Activated CD4-positive, alpha-beta memory T cell treated with anti-CD3 and anti-CD28 coated beads for 36 hours (primary cell): ENCODE measurements at regions of chr11 and their contacts with region 1.

Region 1: DNA sequence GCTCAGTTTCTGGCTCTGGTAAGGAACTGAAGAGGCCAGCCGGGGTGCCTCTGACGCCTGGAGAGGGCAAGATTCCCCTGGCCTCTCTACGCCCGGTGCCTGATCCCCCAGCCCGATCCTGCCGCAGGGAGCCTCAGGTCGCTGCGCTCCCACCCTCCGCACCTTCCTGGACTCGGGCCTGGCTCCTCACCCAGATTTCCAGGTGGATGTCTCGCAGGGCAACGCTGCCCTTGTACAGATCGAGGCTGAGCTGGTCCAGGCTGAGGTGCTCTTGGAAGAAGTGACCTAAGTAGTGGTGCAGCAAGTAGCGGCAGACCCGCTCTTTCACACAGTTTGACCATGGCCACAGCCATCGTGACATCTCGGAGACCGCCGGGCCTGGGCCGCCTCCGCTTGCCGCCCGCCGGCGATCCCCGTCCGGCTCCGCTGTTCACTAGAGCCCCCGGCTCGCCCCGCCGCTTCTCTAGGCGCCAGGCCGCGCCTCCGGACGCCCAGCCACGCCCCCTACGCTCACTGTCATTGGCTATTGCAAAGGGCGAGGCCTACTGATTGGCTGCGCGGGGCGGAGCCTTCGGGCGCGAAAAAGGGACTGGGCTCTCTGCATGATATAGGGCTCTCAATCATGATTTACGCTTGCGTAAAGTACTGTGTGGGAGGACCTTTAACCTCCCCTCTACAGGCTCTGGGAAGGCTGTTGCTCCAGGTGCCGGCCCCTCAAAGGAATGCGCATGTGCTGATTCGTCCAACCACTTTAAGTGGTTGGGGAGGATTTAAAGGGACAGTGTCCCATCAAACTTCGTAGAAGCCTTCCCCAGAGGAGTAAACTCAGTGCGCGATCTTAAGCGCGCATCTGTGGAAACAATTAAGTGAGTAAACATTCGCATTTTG is at the start of gene ATG2A:
- DNase-seq: peak; percentile 99
- H3K4me3 Mint-ChIP-seq: peak within 1 kb of the TSS; percentile 94
- H3K27ac Mint-ChIP-seq: peak within 1 kb of the TSS; percentile 86
- H3K4me1 Mint-ChIP-seq: peaks cover 26% of the 10 kb centered on the region
- H3K27me3 Mint-ChIP-seq: no peaks in the 10 kb centered on the region
- total RNA-seq, gene ATG2A: 20.2 to 20.5 TPM

Region 2: DNA sequence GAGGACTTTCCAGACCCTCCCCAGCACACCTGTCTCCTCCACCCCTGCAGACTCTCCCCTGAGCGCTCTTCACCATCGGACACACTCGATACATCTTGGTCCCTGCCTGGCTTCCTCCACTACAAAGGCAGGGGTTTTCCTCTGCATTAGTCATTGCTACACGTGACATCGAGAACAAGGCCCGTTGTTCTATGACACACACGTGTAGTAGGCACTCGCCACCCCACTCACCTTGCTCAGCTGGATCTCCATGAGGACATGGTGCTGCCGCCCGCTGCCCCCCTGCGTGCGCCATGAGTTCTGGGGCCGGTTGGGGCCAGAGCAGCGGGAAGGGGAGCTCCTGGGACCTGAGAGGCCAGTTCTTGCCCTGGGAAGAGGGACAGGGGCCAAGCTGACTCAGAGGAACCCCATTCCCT is 16.7 kb before region 1 on chr11:
- CTCF ChIA-PET with region 1: interaction called, 3 read pairs
- POLR2A ChIA-PET with region 1: no interaction called
- intact Hi-C with region 1: loop called (anchors 2 kb)
- DNase-seq: peak; percentile 85
- H3K4me3 Mint-ChIP-seq: no peak overlapping the region
- H3K27ac Mint-ChIP-seq: peak overlapping the region; percentile 82
- H3K4me1 Mint-ChIP-seq: peaks cover 23% of the 10 kb centered on the region
- H3K27me3 Mint-ChIP-seq: no peaks in the 10 kb centered on the region

Region 3: DNA sequence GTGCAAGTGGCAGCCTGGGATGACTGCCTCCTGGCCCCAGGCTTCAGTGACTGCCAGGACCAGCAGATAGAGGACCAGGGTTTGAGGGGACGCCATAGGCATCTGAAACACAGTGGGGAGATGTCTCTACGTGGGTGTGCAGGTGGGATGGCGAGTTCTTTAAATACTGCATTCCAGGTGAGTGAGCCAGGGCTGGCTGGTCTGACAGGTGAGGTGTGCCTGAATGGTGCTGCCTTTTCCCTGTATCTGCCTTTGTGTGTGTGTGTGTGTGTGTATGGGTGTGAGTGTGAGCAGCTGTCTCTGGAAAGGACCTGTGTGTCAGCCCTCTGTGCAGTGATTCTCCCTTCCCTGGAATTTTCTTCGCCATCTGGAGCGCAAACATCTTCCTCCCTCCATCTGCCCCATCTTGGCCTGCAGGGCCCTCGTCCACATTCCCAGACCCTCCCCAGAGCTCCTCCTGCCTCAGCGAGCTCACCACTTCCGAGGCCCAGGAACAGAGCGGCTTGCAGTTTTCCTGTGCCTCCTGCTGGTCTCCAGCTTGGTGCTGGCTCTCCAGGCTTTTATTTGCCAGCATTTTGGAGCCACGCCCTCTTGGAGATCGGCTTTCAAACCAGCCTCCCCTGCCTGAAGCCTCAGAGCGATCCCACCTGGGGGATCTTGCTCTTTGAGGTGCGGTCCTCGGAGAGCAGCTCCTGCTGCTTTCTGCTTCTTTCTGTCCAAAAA is 18.5 kb after region 1 on chr11 and contains the start of gene GPHA2:
- CTCF ChIA-PET with region 1: no interaction called
- POLR2A ChIA-PET with region 1: no interaction called
- intact Hi-C with region 1: no loop called
- DNase-seq: no peak
- H3K4me3 Mint-ChIP-seq: no peak within 1 kb of the TSS
- H3K27ac Mint-ChIP-seq: no peak within 1 kb of the TSS
- H3K4me1 Mint-ChIP-seq: peaks cover 3% of the 10 kb centered on the region
- H3K27me3 Mint-ChIP-seq: no peaks in the 10 kb centered on the region
- total RNA-seq, gene GPHA2: 0.46 TPM in 1 of 2 experiments, not detected in the other

Region 4: DNA sequence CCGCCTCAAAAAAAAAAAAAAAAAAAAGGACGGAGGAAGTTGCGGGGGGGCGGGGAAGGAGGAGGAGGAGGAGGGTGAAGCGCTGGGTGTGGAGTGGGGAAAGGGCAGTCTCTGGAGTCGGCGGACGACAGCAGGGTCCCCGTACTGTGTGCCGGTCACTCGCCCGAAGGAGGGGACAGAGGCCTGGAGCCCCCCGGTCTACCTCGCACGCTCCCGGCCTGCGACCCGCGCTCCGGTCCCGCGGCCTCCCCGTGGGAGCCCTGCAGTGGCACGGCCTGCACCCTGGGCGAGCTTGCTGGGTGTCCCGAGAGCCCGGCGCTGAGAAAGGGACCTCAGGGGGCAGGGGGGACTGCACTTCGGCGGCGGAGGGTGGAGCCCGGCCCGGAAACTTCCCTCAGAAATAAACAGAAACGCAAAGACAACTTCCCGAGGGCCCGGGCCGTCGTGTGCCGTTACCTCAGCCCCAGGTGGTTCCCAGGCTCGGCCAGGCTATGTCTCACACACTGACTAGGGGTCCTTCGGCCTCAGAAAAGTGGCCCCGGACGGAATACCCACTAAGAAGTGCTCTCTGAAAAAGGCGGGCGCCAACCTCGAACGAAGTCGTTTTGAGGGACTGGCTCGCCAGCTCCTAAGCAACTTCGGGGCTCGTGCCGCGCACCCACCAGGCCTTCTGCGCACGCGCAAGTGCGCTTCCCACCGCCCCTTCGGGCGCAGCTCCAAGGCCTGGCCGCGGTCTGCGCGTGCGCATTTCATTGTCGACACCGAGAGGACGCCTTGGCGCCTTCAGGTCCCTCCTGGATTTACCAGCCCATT is 54.6 kb after region 1 on chr11 and contains the start of gene MAJIN:
- CTCF ChIA-PET with region 1: no interaction called
- POLR2A ChIA-PET with region 1: no interaction called
- intact Hi-C with region 1: loop called (anchors 5 kb)
- DNase-seq: peak; percentile 91
- H3K4me3 Mint-ChIP-seq: peak within 1 kb of the TSS; percentile 66
- H3K27ac Mint-ChIP-seq: peak within 1 kb of the TSS; percentile 90
- H3K4me1 Mint-ChIP-seq: peaks cover 38% of the 10 kb centered on the region
- H3K27me3 Mint-ChIP-seq: no peaks in the 10 kb centered on the region
- total RNA-seq, gene MAJIN: 0.21 to 0.82 TPM